Mammary epithelial cell (primary cell): ENCODE measurements at regions of chr17 and their contacts with region 1.

Region 1: DNA sequence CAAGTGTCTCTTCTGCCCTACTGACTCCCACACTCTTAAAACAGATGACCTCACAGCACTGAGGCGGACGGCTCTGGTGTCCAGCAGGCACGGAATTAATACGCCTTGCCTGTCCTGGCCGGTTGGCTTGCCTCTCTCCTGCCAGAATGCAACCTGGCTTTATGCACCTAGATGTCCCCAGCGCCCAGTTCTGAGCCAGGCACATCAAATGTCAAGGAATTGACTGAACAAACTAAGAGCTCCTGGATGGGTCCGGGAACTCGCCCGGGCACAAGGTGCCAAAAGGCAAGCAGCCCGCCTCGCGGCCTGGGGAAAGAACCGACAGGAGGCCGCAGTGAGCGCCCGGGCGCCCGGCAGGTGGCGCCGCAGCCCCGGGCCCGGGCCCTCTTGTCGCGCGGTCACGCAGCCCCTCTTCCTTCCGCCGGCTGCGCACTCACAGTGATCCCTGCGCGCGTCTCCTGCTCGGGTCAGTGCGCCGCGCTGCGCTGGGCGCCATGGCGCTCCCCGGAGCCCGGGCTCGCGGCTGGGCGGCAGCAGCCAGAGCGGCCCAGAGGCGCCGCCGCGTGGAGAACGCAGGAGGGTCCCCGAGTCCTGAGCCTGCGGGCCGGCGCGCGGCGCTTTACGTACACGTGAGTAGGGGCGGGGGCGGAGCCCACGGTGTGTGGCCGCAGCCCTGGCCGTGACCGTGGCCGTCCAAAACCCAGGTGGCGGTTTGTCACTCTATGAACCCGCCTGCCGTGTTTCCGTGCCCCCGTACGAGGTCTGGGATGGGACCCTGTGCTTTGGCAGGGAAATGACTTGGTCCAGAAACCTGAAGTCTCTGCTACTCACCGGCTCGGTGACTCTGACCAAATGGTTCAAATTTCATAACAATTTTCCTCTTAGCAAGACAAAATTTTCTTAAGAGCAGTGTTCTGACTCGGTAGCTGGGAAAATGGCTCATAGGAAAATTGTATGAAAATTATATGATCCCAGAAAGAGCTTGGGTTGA is at the start of gene RSAD1:
- DNase-seq: peak; percentile 88
- H3K4me3 ChIP-seq: peak within 1 kb of the TSS; percentile 77 to 98 (median 98)
- H3K27ac ChIP-seq: peak within 1 kb of the TSS; percentile 64
- H3K4me1 ChIP-seq: peaks cover 29% of the 10 kb centered on the region
- H3K27me3 ChIP-seq: no peaks in the 10 kb centered on the region
- CTCF ChIP-seq: peak; percentile 46 to 74
- total RNA-seq, gene RSAD1: 17.2 to 29.9 TPM

Region 2: DNA sequence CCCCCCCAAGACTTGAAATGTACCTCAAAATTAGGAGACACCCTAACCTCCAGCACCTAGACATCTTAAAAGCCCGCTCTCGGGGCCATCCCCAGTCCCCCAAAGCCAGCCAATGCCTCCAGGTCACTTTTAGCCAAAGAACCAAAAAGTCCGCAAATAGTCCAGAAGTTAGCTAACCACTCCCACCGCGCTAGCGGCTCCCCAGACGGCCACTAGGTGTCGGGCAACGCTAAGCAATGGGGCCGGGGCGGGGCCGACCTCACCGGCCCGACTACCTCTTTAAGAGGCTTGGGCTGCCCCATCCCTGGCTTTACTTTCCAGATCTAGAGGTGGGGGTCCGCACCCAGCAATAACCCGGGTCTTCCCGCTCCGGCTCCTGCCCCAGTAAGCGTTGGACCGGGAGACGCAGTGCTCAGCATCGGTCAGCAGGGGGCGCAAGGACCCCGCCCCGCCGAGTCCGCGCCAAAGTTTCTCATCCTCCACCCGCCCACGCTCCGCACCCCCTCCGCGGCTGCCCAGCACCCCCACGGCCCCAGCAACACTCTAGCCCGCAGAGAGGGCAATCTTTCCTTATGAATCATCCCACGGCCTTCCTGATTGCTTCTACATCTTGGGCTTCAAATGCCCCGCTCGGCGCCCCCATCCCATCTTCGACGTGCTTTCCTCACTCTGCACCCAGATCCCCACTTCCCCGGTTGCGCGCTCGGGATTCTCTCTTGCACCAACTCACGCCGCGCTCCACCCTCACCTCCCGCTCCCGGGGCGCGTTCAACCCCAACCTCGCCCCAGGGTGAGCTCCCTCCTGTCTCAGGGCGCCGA is 278.0 kb before region 1 on chr17:
- CTCF ChIA-PET with region 1: interaction called, 7 read pairs
- dilution Hi-C with region 1: no loop called
- in situ Hi-C with region 1: loop called in 1 of 2 experiments (anchors 25 kb)
- intact Hi-C with region 1: loop called (anchors 1 kb)
- DNase-seq: peak; percentile 80
- H3K4me3 ChIP-seq: peak overlapping the region; percentile 49 to 62 (median 61)
- H3K27ac ChIP-seq: peak overlapping the region; percentile 49
- H3K4me1 ChIP-seq: peaks cover 20% of the 10 kb centered on the region
- H3K27me3 ChIP-seq: no peaks in the 10 kb centered on the region
- CTCF ChIP-seq: peak; percentile 69 to 95

Region 3: GRCh38 chr17:50380369-50381259 is 98.1 kb before region 1 on chr17:
- CTCF ChIA-PET with region 1: no interaction called
- dilution Hi-C with region 1: no loop called
- in situ Hi-C with region 1: no loop called
- intact Hi-C with region 1: no loop called
- DNase-seq: no peak
- H3K4me3 ChIP-seq: no peak overlapping the region
- H3K27ac ChIP-seq: no peak overlapping the region
- H3K4me1 ChIP-seq: no peaks in the 10 kb centered on the region
- H3K27me3 ChIP-seq: no peaks in the 10 kb centered on the region
- CTCF ChIP-seq: peak; percentile 4 to 28

Region 4: GRCh38 chr17:50397111-50397918 is 81.4 kb before region 1 on chr17 and contains the start of gene LRRC59:
- CTCF ChIA-PET with region 1: interaction called, 10 read pairs
- dilution Hi-C with region 1: loop called (anchors 5 kb)
- in situ Hi-C with region 1: no loop called
- intact Hi-C with region 1: loop called (anchors 1 kb)
- DNase-seq: peak; percentile 71
- H3K4me3 ChIP-seq: peak within 1 kb of the TSS; percentile 59 to 86 (median 61)
- H3K27ac ChIP-seq: peak within 1 kb of the TSS; percentile 78
- H3K4me1 ChIP-seq: peaks cover 19% of the 10 kb centered on the region
- H3K27me3 ChIP-seq: no peaks in the 10 kb centered on the region
- CTCF ChIP-seq: peak; percentile 93 to 95
- total RNA-seq, gene LRRC59: 118 to 190 TPM

Region 5: GRCh38 chr17:50514946-50515702 is 36.4 kb after region 1 on chr17:
- CTCF ChIA-PET with region 1: interaction called, 4 read pairs
- dilution Hi-C with region 1: loop called (anchors 5 kb)
- in situ Hi-C with region 1: no loop called
- intact Hi-C with region 1: loop called (anchors 5 kb)
- DNase-seq: peak; percentile 60
- H3K4me3 ChIP-seq: no peak overlapping the region
- H3K27ac ChIP-seq: no peak overlapping the region
- H3K4me1 ChIP-seq: peaks cover 63% of the 10 kb centered on the region
- H3K27me3 ChIP-seq: no peaks in the 10 kb centered on the region
- CTCF ChIP-seq: no peak

Region 6: GRCh38 chr17:50547035-50547735 is 68.5 kb after region 1 on chr17 and contains the start of gene SPATA20:
- CTCF ChIA-PET with region 1: no interaction called
- dilution Hi-C with region 1: no loop called
- in situ Hi-C with region 1: no loop called
- intact Hi-C with region 1: loop called (anchors 1 kb)
- DNase-seq: peak; percentile 82
- H3K4me3 ChIP-seq: peak within 1 kb of the TSS; percentile 37 to 56 (median 55)
- H3K27ac ChIP-seq: peak within 1 kb of the TSS; percentile 23
- H3K4me1 ChIP-seq: peaks cover 21% of the 10 kb centered on the region
- H3K27me3 ChIP-seq: no peaks in the 10 kb centered on the region
- CTCF ChIP-seq: peak; percentile 95 to 99
- total RNA-seq, gene SPATA20: 65.6 to 79.9 TPM

Region 7: GRCh38 chr17:50661795-50662391 is 183.2 kb after region 1 on chr17:
- CTCF ChIA-PET with region 1: no interaction called
- dilution Hi-C with region 1: no loop called
- in situ Hi-C with region 1: no loop called
- intact Hi-C with region 1: no loop called
- DNase-seq: peak; percentile 93
- H3K4me3 ChIP-seq: no peak overlapping the region
- H3K27ac ChIP-seq: peak overlapping the region; percentile 62
- H3K4me1 ChIP-seq: peaks cover 31% of the 10 kb centered on the region
- H3K27me3 ChIP-seq: no peaks in the 10 kb centered on the region
- CTCF ChIP-seq: no peak

Region 8: DNA sequence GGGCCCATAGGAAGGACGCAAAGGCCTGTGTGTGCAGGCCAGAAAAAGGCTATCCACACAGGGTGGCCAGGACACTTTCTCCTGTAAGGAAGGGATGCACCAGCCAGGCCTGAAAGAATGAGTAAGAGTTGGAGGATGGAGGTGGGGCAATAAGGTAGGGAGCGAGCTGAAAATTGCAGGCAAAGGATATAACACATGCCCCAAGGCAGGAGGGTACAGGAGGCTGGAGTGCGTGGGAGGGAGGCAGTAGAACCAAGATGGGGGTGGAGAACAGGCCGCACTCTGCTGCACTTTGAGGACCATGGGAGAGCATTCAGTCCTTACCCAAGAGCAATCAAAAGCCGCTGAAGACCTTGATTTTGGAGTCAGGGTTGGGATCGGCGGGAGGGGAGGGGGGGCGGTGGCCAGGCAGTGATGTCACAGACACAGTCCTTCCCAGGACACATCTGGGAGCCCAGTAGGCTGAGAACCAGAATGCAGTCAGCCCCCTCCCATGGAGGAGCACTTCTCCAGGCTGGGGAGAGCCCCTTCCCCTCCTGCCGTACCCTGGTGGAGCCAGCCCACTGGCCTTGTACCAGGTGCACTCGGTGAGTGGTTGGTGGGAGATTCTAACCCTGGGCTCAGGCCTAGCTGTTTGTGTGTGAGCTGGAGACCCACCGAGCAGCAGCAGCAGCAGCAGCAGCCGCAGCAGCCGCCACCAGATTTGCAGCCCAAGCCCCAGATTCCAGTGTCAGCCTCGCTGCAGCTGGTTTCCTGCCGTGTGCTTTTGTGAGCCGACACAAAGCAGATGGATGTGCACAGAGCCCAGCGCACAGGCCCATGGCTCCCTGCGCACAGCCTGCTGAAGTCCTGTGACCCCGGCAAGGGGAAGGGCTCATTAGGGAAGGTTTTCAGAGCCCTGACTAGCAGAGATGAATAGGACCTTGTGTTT is 211.5 kb after region 1 on chr17:
- CTCF ChIA-PET with region 1: no interaction called
- dilution Hi-C with region 1: no loop called
- in situ Hi-C with region 1: loop called in 1 of 2 experiments (anchors 10 kb)
- intact Hi-C with region 1: loop called (anchors 1 kb)
- DNase-seq: peak; percentile 66
- H3K4me3 ChIP-seq: no peak overlapping the region
- H3K27ac ChIP-seq: no peak overlapping the region
- H3K4me1 ChIP-seq: peaks cover 33% of the 10 kb centered on the region
- H3K27me3 ChIP-seq: no peaks in the 10 kb centered on the region
- CTCF ChIP-seq: no peak